ENCODE measurements at regions of chr1 and their contacts with region 1.

Region 1: DNA sequence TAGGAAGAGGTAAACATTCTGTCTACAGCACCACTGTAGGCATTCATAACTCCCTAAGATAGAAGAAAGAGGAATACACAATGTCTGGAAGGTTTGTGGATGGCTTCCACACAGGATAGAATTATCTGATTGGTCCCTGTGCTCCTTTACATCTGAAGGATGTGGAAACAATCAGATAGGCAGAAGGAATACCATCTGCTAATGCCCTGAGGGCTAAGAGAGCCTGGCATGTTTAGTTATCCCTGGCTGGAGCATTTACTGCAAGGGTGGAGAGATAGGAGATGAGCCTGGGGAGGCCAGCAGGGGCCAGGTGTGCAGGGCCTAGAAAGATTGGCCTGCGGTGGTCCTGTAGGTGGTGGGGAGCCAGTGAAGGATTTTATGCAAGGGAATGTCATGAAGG is 8.6 kb upstream of the ACBD3 start:
- DNase-seq: no peak
- H3K4me3 ChIP-seq: no peak overlapping the region
- H3K27ac ChIP-seq: no peak overlapping the region
- H3K4me1 ChIP-seq: no peaks in the 10 kb centered on the region
- H3K27me3 ChIP-seq: no peaks in the 10 kb centered on the region
- CTCF ChIP-seq: no peak

Region 2: DNA sequence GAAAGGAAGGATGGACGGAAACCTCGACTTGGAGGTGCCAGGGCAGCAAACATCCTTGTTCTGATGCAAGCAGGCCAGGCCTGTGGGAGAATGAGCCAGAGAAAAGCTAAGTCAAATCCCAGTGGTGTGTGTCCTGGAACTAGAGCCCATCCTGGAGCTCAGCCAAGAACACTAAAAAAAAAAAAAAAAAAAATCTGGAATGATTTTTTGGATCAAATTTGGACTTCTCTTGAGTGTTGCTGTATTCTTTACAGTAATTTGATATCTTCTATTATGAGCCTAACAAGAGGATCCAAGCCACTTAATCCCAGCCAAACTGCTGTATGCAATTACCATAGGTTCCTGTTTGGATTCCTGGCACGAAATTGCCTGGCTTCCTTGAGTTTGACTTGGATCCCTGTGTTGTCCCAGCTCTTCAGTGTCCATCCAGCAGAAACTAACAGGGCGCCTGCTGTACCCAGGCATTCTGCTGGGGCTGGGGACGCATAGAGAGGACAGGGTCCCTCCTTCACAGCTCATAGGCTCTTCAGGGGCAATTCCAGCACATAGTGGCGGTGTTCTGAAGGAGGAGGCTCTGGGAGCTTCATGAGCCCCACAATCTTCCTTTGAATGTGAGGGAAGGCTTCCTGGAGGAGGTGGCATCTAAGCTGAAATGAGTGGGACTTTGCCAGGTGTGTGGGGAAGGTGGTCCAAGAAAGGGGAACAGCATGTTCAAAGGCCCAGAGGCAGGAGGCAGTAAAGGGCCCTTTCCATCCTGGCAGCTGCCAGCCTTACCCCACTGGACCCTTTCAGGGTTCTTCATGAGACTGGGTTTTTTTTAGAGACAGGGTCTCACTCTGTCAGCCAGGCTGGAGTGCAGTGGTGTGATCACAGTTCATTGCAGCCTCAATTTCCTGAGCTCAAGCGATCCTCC is 360.5 kb before region 1 on chr1:
- intact Hi-C with region 1: no loop called
- DNase-seq: peak in 2 of 5 donors; percentile 69 to 80
- H3K4me3 ChIP-seq: no peak overlapping the region
- H3K27ac ChIP-seq: no peak overlapping the region
- H3K4me1 ChIP-seq: no peaks in the 10 kb centered on the region
- H3K27me3 ChIP-seq: no peaks in the 10 kb centered on the region
- CTCF ChIP-seq: no peak

Region 3: GRCh38 chr1:225977937-225978748 is 217.0 kb before region 1 on chr1:
- intact Hi-C with region 1: no loop called
- DNase-seq: no peak
- H3K4me3 ChIP-seq: no peak overlapping the region
- H3K27ac ChIP-seq: no peak overlapping the region
- H3K4me1 ChIP-seq: peaks cover 0 to 2% (median 0%) of the 10 kb centered on the region in 3 donors
- H3K27me3 ChIP-seq: no peaks in the 10 kb centered on the region
- CTCF ChIP-seq: no peak

Region 4: DNA sequence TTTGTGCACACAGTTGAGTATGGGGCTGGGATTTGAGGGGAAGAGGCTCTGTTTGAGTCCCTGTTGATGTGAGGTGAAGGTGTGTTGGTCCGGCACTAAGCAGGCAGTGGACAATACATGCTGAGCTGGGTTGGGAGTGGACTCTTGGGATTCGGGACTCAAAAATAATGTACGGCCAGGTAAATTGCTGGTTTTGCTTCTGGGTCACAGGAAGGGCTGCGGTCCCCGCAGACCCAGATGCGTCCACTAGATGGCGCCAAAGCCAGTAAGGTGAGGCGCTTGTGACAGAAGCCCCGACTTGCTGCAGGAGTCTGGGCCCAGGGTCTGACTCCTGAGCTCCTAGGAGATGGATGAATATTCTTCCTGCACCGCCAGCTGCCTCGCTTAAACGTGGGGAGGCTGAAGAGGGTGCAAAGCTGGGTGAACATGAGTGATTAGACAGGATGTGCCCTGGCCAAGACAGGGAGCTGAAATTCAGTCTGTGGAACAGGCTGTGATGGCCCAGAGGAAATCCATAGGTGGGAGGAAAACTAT is 70.0 kb before region 1 on chr1:
- intact Hi-C with region 1: loop called (anchors 5 kb)
- DNase-seq: peak; percentile 92 to 93 (median 92)
- H3K4me3 ChIP-seq: no peak overlapping the region
- H3K27ac ChIP-seq: no peak overlapping the region
- H3K4me1 ChIP-seq: peaks cover 0 to 15% (median 7%) of the 10 kb centered on the region in 3 donors
- H3K27me3 ChIP-seq: no peaks in the 10 kb centered on the region
- CTCF ChIP-seq: peak; percentile 93

Region 5: GRCh38 chr1:226569879-226570547 is 374.9 kb after region 1 on chr1:
- intact Hi-C with region 1: no loop called
- DNase-seq: peak in 1 of 5 donors; percentile 40
- H3K4me3 ChIP-seq: no peak overlapping the region
- H3K27ac ChIP-seq: no peak overlapping the region
- H3K4me1 ChIP-seq: no peaks in the 10 kb centered on the region
- H3K27me3 ChIP-seq: no peaks in the 10 kb centered on the region
- CTCF ChIP-seq: no peak